PC-3 (cell line): ENCODE measurements at regions of chr17 and their contacts with region 1.

Region 1: DNA sequence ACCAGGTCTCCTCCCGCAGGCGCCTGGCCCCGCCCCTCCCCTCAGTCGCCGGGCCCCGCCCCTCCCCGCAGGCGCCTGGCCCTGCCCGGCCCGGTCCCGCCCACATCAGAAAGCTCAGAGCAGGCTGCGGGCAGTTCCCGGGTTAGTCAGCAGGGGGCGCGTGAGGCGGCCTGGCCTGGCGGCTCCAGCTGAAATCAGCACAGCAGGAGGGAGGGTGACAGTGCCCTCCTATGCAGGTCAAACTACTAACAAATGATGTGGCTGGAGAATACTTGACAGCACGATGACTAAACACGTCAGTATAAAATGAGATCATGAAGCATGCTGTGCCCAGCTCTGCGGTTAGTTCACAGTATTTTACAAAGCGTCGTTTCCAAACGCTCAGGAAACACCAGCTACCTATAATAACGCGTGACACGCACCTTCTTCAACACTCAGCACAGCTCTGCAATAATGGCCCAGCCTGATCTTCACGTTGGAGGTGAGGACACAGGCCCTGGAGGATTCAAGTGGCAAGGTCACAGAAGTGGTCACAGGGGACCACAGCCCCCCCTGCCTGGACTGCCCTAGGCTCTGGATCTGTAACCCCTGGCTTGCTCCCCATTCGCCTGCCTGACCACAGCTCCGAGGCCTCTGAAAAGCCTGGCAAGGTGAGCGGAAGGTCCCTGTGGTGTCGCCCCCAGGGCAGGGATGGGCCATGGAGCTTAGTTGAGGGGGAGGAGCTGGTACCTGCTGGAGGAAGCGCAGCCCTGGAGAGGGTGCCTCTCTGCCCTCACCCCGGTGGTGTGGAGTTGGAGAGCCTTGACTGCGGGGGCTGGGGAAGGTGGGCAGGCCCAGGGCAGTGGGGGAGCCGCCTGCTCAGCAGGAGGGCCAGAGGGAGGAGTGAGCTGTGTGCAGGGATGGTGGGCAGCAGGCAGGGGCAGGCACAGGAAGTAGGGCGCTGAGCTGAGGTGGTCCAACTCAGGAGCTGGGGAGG is 81.2 kb downstream of the KCNJ12 start:
- DNase-seq: peak; percentile 93
- ATAC-seq: peak; percentile 93
- H3K4me3 ChIP-seq: no peak overlapping the region
- H3K27ac ChIP-seq: peak overlapping the region; percentile 29; the same call in 1 of the 2 replicates
- H3K4me1 ChIP-seq: peaks cover 6% of the 10 kb centered on the region
- H3K27me3 ChIP-seq: peaks cover 19% of the 10 kb centered on the region; the same call in 1 of the 2 replicates
- CTCF ChIP-seq: peak; percentile 88

Region 2: DNA sequence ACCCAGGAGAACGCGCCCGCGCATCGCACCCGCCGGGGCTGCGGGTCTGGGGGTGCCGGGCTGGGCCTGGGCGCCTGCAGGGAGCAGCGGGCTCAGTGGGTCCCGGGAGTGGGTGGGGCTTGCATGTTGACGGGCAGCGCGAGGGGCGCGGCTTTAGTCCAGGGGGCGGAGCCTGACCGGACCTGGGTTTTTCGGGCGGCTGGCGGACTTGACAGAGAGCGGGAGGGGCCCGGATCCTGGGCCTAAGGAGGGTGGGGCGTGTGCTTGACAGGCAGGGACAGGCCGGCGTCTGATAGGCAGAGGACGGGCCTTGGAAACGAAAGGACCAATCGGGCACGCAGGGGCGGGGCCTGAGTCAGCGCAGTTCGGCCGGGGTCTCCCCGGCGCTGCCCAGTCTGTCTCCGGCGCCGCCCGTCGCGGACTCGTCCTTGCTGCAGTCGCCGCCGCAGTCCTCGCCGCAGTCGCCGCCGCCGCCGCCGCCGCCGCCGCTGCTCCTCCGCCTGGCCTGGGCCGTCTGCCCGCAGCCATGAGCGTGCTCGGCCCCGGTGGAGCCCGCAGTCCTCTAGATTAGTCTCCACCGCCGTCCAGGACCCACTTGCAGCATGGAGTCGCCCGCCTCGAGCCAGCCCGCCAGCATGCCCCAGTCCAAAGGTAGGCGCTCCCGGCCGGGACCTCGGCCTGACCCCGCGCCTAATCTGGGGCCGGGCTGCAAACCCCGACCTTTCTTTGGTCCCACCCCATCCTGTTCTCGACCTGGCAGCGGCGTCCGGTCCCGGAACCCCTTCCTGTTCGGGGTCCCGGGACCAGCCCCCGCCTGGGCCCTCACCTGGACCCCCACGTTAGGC is 172.8 kb before region 1 on chr17 and contains the start of gene MAP2K3:
- CTCF ChIA-PET with region 1: interaction called, 13 read pairs
- POLR2A ChIA-PET with region 1: no interaction called
- intact Hi-C with region 1: no loop called
- DNase-seq: peak; percentile 99
- ATAC-seq: peak; percentile 62
- H3K4me3 ChIP-seq: peak within 1 kb of the TSS; percentile 87
- H3K27ac ChIP-seq: peak within 1 kb of the TSS; percentile 96
- H3K4me1 ChIP-seq: peaks cover 50% of the 10 kb centered on the region
- H3K27me3 ChIP-seq: no peaks in the 10 kb centered on the region
- CTCF ChIP-seq: no peak
- total RNA-seq, gene MAP2K3: 54.0 and 75.2 TPM in 2 replicates

Region 3: DNA sequence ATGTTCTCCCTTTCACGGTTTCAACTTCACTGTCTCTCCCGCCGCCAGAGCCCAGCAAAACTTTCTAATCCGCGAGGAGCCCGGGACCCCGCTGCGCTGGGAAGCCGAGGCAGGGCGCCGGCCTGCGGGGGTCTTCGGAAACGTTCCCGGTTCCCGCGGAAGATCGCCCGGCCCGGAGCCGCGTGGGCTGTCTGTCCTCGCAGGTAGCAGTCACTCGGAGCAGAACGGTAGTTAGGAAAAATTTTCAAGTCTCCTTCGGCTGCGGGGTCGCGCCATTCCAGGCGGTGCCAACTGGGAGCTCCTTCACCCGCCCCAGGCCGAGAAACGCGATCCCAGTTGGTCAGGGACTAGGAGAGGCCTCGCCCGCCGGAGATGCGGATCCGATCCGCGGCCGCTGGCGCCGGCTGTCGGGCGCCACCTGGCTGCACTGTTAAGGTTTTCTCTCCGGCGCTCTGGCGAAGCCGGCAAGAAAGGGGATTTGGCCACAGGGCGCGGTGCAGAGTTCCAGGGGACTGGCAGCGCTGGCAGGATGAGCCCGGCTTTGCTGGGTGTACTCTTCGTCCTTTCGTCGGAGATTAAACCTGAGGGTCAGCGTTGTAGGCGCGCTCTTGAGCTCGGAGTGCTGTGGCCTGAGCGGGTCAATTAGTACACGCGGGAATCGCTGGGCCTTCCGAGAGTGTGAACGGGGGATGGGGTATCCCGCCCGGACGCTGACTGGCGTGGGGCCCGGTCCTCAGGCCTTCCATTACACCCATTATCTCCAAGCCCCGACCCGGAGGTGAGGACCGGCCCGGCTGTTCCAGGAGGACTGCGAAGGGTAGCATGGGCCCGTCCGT is 54.2 kb after region 1 on chr17:
- CTCF ChIA-PET with region 1: interaction called, 24 read pairs
- POLR2A ChIA-PET with region 1: no interaction called
- intact Hi-C with region 1: loop called (anchors 1 kb)
- DNase-seq: peak; percentile 81
- ATAC-seq: peak; percentile 90
- H3K4me3 ChIP-seq: no peak overlapping the region
- H3K27ac ChIP-seq: no peak overlapping the region
- H3K4me1 ChIP-seq: no peaks in the 10 kb centered on the region; the same call in 1 of the 2 replicates
- H3K27me3 ChIP-seq: 0 out of 2 replicates have a peak, but pooled peaks cover 4% of the 10 kb centered on the region
- CTCF ChIP-seq: peak; percentile 82